ENCODE measurements at regions of chr5 and their contacts with region 1.

Region 1: GRCh38 chr5:528625-529511 is 4.6 kb upstream of the SLC9A3 start:
- DNase-seq: no peak
- ATAC-seq: peak; percentile 20
- H3K4me3 Mint-ChIP-seq: no peak overlapping the region
- H3K27ac Mint-ChIP-seq: no peak overlapping the region
- H3K4me1 Mint-ChIP-seq: peaks cover 27% of the 10 kb centered on the region
- H3K27me3 Mint-ChIP-seq: peaks cover 62% of the 10 kb centered on the region

Region 2: DNA sequence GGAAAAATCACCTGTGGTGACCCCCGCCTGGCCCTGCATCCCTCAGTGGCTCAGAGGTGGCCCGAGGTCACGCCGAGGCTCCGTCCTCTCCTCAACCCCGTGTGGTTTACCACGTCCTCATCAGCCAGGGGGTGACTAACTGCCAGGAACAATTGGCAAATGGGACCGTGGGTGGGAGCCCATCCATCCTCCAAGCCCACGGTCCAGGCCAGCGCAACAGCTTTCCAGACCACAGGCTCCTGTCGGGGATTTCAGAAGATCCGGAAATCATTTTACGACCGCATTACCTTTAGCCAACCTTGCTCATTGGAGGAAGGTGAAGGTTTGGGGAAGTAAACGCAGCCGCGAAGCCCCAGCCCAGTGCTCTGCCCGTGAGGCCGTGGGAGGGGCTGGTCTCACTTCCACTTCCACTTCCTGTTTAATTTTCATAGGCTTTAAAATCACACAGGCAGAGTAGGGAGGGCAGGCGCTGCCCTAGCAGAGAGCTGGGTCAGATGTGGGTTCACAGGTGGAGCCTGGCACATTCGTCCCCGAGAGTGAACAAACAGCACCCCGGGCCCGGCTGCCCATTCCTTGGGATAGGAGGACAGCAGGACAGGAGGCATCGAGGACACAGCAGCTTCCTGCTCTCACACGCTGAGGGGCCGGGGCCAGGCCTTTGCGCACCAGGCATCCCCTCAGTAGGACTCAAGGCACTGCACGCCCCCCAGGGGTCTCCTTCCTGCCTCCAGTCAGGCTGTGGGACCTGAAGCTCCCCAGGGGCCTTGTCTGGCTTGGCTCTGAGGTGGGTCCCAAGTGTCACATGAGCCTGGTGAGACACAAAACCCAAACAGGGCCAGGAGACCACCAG is 15.2 kb after region 1 on chr5:
- CTCF ChIA-PET with region 1: interaction called, 12 read pairs
- DNase-seq: peak; percentile 80
- ATAC-seq: peak; percentile 87
- H3K4me3 Mint-ChIP-seq: peak overlapping the region; percentile 45
- H3K27ac Mint-ChIP-seq: peak overlapping the region; percentile 84
- H3K4me1 Mint-ChIP-seq: peaks cover 19% of the 10 kb centered on the region
- H3K27me3 Mint-ChIP-seq: peaks cover 13% of the 10 kb centered on the region

Measured in activated CD8-positive, alpha-beta memory T cell treated with anti-CD3 and anti-CD28 coated beads, Interleukin-2, amount 10 ng/mL, durations not matched to agents 7 days and 5 days (primary cell).